ENCODE measurements at regions of chr3 and their contacts with region 1.

Region 1: DNA sequence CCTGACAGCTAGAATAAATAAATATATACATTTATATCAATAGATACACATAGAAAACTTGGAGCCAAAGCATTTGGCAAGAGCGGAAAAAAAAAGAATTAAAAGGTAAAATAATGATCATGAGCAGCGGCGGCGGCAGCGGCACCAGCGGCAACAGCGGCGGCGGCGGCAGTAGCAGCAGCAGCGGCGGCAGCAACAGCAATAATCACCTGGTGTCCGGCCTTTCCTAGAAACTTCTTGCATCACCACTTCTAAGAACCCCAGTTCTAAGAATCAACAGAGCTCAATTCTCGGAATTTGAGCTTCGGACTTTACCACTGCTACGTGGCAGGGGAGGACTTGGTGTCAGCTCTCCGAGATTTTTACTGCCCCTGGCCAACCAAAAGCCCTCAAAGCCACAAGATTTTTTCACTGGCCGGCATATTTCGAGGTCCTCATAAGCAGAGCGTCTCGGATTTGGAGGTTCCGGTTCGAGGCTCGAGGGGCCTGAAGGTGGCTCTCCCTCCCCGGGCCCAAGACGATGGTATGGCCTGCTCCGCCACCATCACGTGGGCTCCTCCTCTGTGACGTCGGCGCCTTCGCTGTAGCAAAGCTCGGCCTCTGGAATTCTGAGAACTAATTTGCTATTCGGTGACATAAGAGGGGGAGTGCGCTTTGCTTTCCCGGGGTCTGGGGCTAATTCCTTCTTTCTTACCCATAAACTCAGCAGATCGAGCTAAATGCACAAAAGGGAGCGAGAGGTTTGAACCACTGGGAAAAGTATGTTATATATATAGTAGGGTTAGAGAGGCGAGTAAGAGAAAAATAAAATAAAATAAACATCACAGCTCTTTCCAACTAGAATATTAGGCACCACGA is at the start of gene BCL6:
- DNase-seq: peak; percentile 96
- H3K4me3 ChIP-seq: peak within 1 kb of the TSS; percentile 94
- CTCF ChIP-seq: no peak

Region 2: DNA sequence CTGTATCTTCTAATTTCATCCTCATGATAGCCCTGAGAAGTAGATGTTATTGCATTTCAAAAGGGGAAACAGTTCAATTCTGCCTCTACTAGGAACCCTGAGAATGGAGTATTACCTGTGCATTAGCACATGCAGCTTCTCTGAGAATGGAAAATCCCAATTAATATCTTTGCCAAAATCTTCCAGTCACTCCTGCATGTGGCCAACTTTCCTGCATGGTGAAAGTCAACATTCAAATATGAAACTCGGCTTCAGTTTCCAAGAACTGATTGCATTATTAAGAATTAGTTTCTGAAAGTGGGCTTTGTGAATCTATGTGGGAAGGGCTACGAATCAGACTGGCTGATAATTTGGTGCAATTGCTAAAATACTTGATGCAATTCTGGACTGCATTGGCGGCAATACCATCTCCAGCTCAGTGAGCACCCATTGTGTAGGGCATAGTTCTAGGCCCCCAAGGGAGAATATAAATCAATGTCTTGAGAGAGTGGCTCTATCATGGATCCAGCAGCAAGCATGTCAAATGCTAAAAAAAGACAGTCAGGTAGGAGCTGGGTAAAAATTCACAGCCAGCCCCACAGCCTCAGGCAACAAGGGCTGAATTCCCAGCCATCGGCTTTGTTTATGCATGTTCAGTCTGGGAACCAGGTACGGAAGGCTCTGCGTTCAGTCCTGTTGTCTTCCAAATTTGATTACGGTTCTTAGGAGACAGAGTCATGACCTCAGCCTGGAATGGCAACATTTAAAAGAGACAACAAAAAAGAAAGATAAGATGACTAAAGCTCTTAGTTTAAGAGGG is 18.6 kb after region 1 on chr3:
- CTCF ChIA-PET with region 1: interaction called, 72 read pairs
- POLR2A ChIA-PET with region 1: interaction called, 7 read pairs
- DNase-seq: no peak
- H3K4me3 ChIP-seq: no peak overlapping the region
- CTCF ChIP-seq: no peak

Region 3: DNA sequence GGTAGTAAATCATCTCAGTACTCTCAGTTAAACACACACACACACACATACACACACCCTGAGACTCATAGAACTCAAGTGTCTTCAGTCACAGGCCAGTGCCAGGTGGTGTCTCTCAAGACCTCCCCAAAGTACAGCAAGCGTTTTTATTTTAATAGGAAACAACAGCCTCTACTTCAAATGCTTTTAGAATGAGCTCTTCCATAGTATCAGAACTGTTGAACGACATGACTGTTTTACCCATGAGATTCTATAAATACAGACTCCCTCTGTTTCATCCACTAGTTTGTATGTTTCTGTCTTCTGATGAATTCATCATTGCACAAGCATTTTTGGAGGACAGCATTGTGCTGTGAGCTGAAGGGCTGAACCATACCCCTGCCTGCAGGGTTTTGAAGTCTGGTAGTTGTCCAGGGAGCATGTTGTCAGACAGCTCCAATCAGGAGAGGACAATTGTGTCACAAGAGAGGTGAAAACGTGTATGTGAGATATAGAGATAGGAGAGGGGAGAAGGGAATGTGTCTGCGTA is 200.8 kb after region 1 on chr3:
- CTCF ChIA-PET with region 1: interaction called, 12 read pairs
- POLR2A ChIA-PET with region 1: no interaction called
- DNase-seq: no peak
- H3K4me3 ChIP-seq: no peak overlapping the region
- CTCF ChIP-seq: no peak

Region 4: DNA sequence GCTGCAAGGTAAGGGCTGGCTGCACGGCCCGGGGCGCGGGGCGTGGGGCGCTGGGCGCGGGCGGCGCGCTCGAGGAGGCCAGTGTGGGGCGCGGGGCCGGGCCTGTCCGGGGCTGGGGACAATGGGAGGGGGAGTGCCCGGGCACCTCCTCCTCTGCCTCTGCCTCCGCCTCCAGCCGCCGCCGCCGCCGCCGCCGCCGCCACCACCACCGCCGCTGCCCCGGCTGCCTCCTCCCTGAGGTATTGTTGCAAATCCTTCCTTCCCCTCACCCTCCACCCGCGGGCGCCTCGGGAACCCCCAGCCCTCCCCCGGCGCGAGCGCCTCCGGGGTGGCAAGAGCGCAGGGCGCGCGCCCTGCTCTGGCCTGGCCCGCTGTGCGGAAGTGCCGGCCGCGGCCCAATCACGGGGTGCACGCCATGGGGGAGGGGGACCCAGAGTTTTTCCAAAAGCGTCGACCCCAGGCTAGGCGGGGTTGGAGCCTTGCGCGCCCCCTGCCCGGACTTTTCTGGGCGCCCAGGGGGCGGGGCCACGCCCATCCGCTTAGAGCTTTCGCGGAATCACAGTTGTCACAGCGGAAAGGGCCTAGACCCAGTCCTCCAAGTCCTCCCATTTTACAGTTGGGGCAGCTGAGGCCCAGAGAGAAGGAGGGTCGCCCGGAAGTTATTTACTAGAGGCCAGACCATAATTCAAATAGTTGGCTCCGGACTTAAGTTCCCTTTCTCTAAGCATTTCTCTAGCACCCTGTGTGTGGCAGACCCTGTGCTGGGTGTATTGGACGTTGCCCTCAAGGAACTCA is 408.8 kb after region 1 on chr3 and contains the start of gene LPP:
- CTCF ChIA-PET with region 1: interaction called, 26 read pairs
- POLR2A ChIA-PET with region 1: interaction called, 19 read pairs
- DNase-seq: no peak
- H3K4me3 ChIP-seq: peak within 1 kb of the TSS; percentile 79
- CTCF ChIP-seq: no peak

Region 5: DNA sequence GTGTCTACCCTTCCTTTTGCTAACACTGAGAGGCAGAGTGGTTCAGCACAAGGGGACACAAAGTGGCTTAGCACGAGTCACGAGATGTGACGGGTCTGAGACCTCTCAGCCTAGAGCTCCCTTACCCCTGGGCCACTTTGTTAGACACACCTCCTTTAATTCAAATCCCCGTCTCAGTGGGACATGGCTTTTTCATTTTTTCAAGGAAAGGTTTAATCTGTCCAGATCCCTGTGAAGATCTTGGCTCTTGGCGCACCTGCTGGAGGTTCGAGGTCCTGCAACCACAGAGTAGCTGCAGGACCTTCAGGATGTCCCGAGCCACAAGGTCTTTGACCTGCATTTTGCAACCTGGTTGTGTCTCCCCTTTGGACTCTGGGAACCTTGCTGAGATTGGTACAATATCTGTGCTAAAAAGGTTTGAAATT is 460.6 kb after region 1 on chr3:
- CTCF ChIA-PET with region 1: interaction called, 15 read pairs
- POLR2A ChIA-PET with region 1: interaction called, 3 read pairs
- DNase-seq: no peak
- H3K4me3 ChIP-seq: no peak overlapping the region
- CTCF ChIP-seq: no peak

Region 6: GRCh38 chr3:188262913-188263683 is 517.7 kb after region 1 on chr3:
- CTCF ChIA-PET with region 1: interaction called, 61 read pairs
- POLR2A ChIA-PET with region 1: interaction called, 4 read pairs
- DNase-seq: no peak
- H3K4me3 ChIP-seq: no peak overlapping the region
- CTCF ChIP-seq: no peak

Region 7: DNA sequence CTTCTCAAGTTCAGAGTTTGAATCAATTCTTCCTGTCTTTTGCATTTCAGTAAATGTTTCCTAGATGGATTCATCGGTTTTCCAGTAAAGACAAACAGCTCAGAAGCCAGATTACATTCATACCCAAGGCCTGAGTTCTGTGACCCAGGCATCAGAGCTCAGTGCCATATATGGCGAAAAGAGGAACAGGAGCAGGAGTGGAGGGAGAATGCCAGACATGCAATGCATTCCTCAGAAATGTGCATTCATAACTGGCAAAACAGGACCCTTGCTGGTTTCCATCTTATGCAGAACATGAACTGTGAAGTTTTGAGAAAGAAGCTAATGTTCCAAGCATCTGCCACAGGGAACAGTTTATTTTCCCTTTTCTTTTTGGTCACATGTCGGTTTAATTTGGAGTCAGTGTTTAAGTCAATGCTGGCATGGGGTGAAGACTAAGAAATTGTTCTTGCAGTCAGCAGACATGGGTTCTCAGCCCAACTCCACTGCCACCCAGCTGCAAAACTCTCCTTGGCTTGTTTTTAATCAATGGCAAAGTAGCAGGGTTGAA is 525.1 kb after region 1 on chr3:
- CTCF ChIA-PET with region 1: interaction called, 61 read pairs
- POLR2A ChIA-PET with region 1: interaction called, 14 read pairs
- DNase-seq: peak; percentile 95
- H3K4me3 ChIP-seq: no peak overlapping the region
- CTCF ChIP-seq: no peak

Measured in AG04449 (cell line).